ENCODE measurements at regions of chr1 and their contacts with region 1.

Region 1: DNA sequence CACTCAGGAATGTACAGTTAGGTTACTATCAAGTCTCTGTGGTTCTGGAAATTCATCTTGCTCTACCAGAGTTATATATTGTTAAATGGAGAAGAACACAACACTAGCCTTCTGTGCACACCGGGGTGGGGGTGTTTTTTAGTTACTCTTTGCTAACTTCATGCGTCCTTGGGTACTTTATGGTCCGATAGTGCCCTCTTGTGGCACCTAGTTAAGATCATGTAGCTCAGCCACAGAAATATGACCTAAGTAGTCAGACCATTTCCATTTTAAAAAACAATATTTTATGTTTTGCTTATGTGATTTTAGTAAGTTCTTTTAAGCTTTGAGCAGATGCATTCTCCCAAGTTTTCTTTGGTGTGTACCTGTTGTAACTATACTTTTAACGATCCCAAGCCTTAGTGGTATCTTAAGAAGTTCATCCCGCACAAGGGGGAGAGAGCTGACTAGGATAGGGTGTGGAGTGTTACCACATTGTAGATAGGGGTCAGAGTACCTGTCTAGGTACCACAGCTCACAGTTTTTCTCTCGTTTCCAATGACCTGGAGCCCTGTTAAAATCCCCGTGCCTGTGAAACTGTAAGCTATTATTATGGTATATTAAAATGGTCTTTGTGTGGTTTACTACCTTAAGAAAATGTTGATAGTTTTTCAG is 20.6 kb upstream of the SH3D21 start:
- DNase-seq: no peak
- H3K4me3 ChIP-seq: no peak overlapping the region
- H3K27me3 ChIP-seq: no peaks in the 10 kb centered on the region
- CTCF ChIP-seq: peak; percentile 68

Region 2: GRCh38 chr1:36199934-36200741 is 85.4 kb before region 1 on chr1:
- CTCF ChIA-PET with region 1: no interaction called
- POLR2A ChIA-PET with region 1: no interaction called
- DNase-seq: no peak
- H3K4me3 ChIP-seq: no peak overlapping the region
- H3K27me3 ChIP-seq: no peaks in the 10 kb centered on the region
- CTCF ChIP-seq: no peak

Region 3: GRCh38 chr1:36217670-36218069 is 67.9 kb before region 1 on chr1:
- CTCF ChIA-PET with region 1: no interaction called
- POLR2A ChIA-PET with region 1: no interaction called
- DNase-seq: no peak
- H3K4me3 ChIP-seq: no peak overlapping the region
- H3K27me3 ChIP-seq: no peaks in the 10 kb centered on the region
- CTCF ChIP-seq: peak; percentile 42

Region 4: GRCh38 chr1:36269408-36269838 is 16.2 kb before region 1 on chr1:
- CTCF ChIA-PET with region 1: interaction called, 12 read pairs
- POLR2A ChIA-PET with region 1: no interaction called
- DNase-seq: no peak
- H3K4me3 ChIP-seq: no peak overlapping the region
- H3K27me3 ChIP-seq: no peaks in the 10 kb centered on the region
- CTCF ChIP-seq: no peak

Region 5: GRCh38 chr1:36300526-36300925 is 15.0 kb after region 1 on chr1:
- CTCF ChIA-PET with region 1: interaction called, 56 read pairs
- POLR2A ChIA-PET with region 1: interaction called, 3 read pairs
- DNase-seq: no peak
- H3K4me3 ChIP-seq: no peak overlapping the region
- H3K27me3 ChIP-seq: no peaks in the 10 kb centered on the region
- CTCF ChIP-seq: no peak